Left cardiac atrium (tissue), 4 donors: ENCODE measurements at regions of chr15 and their contacts with region 1.

Region 1: DNA sequence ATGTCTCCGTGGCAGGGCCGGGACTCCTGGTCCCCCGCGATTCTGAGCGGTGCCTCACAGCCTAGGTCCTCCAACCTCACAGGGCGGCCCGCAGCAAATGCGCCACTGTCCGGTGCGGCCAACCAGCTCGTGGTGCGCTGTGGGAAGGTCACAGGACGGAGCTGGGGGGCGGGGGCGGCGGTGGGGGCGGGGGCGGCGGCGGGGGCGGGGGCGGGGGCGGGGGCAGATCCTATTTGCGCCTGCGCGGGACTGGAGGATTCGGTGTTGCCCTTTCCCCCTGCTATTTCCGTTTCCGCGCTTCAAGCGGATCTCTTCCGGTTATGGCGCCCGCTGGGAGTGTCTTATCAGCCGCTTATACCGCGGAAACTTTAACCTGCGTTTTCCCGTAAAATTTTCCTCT is 106.7 kb upstream of the SNRPN start:
- DNase-seq: peak; percentile 53
- ATAC-seq: peak; percentile 84 to 92

Region 2: GRCh38 chr15:23642413-23643044 is 1205.5 kb before region 1 on chr15:
- intact Hi-C with region 1: loop called in 1 of 2 experiments (anchors 10 kb)
- DNase-seq: peak; percentile 45
- ATAC-seq: peak; percentile 81 to 85

Region 3: DNA sequence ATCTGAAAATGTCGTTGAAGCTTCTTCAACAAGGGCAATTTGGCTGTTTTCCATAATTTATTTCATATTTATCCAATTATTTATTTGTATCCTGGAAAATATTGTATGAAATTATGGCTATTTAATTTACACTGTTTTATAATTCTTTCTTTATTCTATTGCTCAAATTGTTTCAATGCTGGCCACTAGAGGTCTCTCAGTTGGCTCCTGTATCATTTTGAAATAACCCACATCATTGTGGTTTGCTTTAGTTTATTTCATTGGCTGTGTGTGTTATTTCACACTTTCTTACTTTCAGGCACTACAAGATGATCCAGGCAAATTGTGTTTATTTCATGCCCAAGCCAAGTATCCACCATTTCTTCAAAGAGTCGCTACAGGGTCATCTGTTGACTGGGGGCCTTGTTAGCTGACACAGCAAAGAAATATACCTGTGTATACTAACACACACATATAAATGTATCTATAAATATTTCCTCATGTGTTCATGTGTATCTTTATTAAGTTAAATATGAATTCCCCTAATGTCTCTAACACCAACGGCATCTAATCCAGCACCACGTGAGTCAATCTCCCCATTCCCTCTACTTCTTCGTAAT is 86.2 kb before region 1 on chr15:
- intact Hi-C with region 1: loop called in 1 of 2 experiments (anchors 10 kb)
- DNase-seq: no peak
- ATAC-seq: no peak

Region 4: GRCh38 chr15:25508369-25509002 is 660.4 kb after region 1 on chr15:
- intact Hi-C with region 1: no loop called
- DNase-seq: no peak
- ATAC-seq: peak in 1 of 2 donors; percentile 45